ENCODE measurements at regions of chr15 and their contacts with region 1.

Region 1: DNA sequence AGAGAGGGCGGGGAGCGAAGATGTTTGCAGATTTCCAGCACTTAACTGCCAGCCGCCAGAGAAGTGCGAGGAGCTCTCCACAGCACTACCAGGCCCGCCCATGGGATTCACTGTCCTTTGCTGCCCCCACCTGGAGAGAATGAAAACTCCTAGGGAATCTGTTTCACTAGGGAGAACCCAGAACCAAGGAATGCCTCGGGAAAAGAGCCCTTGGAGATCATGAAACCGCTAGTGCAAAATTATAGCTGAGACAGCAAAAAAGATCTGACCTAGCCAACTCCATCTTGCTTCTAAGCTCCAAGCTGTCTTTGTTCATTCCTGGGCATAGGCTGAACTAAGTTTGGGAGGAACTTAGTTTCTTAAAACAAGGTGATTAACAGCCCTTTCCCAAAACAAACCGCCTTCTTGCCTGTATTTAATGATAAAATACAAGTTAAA is 82.6 kb upstream of the GCNT3 start:
- DNase-seq: peak; percentile 92
- H3K4me3 Mint-ChIP-seq: no peak overlapping the region
- H3K27ac Mint-ChIP-seq: no peak overlapping the region
- H3K4me1 Mint-ChIP-seq: peaks cover 14% of the 10 kb centered on the region
- H3K27me3 Mint-ChIP-seq: peaks cover 10% of the 10 kb centered on the region

Region 2: DNA sequence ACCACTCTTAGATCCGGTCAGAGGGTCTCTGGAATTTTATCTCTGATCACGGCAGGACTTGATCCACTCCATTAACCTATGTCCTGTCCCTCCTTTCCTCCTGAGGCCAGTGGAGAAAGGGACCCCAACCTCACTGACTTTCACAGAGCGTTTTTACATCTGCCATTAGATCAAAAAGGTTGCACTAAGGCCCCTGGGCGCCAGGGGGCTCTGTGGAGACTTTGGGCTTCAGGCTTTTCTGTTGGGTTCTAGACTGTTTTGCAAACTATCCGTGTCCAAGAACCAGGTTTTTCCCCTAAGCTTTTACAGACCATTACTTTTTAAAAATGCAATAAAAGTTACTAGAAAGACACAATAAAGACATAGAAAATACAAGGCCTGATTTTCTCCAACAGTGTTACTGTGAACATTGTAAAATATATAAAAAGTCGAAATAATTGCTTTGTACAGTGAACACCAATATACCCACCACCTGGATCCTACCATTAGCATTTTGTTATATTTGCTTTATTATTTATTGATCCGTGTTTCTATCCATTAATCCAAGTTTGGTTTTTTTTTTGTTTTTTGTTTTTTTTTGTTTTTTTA is 1662.7 kb before region 1 on chr15:
- intact Hi-C with region 1: loop called (anchors 5 kb)
- DNase-seq: peak; percentile 89
- H3K4me3 Mint-ChIP-seq: no peak overlapping the region
- H3K27ac Mint-ChIP-seq: no peak overlapping the region
- H3K4me1 Mint-ChIP-seq: peaks cover 12% of the 10 kb centered on the region
- H3K27me3 Mint-ChIP-seq: peaks cover 47% of the 10 kb centered on the region

Region 3: GRCh38 chr15:58957101-58957973 is 571.6 kb before region 1 on chr15:
- intact Hi-C with region 1: loop called (anchors 10 kb)
- DNase-seq: peak; percentile 89
- H3K4me3 Mint-ChIP-seq: no peak overlapping the region
- H3K27ac Mint-ChIP-seq: no peak overlapping the region
- H3K4me1 Mint-ChIP-seq: peaks cover 10% of the 10 kb centered on the region
- H3K27me3 Mint-ChIP-seq: peaks cover 3% of the 10 kb centered on the region

Region 4: GRCh38 chr15:59420108-59420507 is 108.9 kb before region 1 on chr15:
- intact Hi-C with region 1: no loop called
- DNase-seq: peak; percentile 71
- H3K4me3 Mint-ChIP-seq: no peak overlapping the region
- H3K27ac Mint-ChIP-seq: no peak overlapping the region
- H3K4me1 Mint-ChIP-seq: peaks cover 12% of the 10 kb centered on the region
- H3K27me3 Mint-ChIP-seq: peaks cover 47% of the 10 kb centered on the region

Region 5: DNA sequence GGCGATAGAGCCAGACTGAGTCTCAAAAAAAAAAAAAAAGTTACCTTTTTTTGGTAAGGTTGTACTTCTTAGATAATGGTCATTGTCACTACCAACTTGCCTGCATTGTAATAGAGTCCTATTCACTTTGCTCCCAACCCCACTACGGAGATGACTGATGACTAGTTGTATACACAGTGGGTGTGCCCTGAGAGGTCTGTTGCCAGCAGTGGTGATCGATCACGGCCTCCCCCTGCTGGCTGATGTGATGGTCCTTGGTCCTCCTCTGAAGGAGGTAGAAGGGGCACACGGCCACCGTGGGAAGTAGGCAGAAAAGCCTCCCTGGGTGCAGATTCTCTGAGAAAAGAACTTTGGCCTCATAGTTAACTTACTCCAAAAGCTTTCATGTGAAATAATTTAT is 93.3 kb after region 1 on chr15:
- intact Hi-C with region 1: loop called (anchors 1 kb)
- DNase-seq: peak; percentile 79
- H3K4me3 Mint-ChIP-seq: no peak overlapping the region
- H3K27ac Mint-ChIP-seq: no peak overlapping the region
- H3K4me1 Mint-ChIP-seq: no peaks in the 10 kb centered on the region
- H3K27me3 Mint-ChIP-seq: peaks cover 10% of the 10 kb centered on the region

Region 6: DNA sequence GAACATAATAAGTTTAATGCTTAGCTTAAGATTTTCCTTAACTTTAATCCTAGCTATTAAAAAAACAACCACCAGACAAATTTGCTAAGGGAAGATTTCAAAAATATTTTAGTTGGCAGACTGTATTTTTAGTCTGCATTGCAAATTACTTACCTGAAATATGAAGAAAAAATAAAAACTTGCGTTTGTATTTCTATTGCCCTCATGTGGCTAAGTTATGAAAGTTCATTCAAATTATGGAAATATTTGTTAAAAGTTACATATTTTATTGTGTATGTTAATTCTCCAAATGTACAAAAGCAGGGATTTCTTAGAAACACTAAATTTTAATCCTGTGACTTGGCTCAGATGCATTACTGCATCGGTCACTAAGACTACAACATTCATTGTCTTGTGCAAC is 113.4 kb after region 1 on chr15:
- intact Hi-C with region 1: loop called (anchors 1 kb)
- DNase-seq: no peak
- H3K4me3 Mint-ChIP-seq: no peak overlapping the region
- H3K27ac Mint-ChIP-seq: no peak overlapping the region
- H3K4me1 Mint-ChIP-seq: no peaks in the 10 kb centered on the region
- H3K27me3 Mint-ChIP-seq: no peaks in the 10 kb centered on the region

Measured in activated CD4-positive, alpha-beta T cell treated with anti-CD3 and anti-CD28 coated beads, Interleukin-2, amount 10 ng/mL, durations not matched to agents 24 days and 14 days (primary cell).